ENCODE measurements at regions of chr4 and their contacts with region 1.

Region 1: DNA sequence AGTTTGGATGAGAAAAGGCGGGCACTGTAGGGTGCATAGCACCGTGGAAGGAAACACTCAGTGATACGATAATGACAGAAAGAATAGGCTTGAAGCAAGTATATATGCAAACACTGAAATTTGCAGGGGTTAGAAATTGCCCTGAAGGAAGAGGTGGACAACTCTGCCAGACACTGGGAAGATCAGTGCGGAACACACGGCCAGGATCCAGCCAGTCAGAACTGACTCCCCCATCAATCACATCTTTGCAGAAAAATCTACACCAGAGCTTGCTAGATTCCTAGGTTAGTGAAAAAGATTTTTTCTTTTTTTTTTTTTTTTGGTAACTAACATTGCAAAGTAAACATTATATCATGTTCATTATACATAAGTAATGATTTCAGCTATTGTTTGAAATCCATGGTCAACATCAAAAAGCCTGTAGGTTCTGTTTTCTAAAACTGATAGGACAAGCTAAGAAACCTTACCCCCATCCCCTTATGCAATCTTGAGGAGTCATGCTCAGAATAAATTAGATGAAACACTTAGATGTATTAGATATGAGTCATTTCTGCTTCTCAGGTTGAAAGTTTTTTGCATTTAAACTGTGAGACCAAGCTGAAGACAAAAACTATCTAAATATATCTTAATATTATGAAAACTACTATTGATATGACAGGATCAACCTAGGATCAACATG is 38.9 kb downstream of the TRIML1 start:
- DNase-seq: peak; percentile 78
- H3K4me3 Mint-ChIP-seq: no peak overlapping the region
- H3K27ac Mint-ChIP-seq: no peak overlapping the region
- H3K4me1 Mint-ChIP-seq: peaks cover 25% of the 10 kb centered on the region
- H3K27me3 Mint-ChIP-seq: no peaks in the 10 kb centered on the region
- CTCF ChIP-seq: no peak

Region 2: GRCh38 chr4:187618701-187619281 is 559.3 kb before region 1 on chr4:
- CTCF ChIA-PET with region 1: no interaction called
- POLR2A ChIA-PET with region 1: no interaction called
- intact Hi-C with region 1: loop called (anchors 1 kb)
- DNase-seq: peak; percentile 41
- H3K4me3 Mint-ChIP-seq: no peak overlapping the region
- H3K27ac Mint-ChIP-seq: peak overlapping the region; percentile 57
- H3K4me1 Mint-ChIP-seq: peaks cover 11% of the 10 kb centered on the region
- H3K27me3 Mint-ChIP-seq: no peaks in the 10 kb centered on the region
- CTCF ChIP-seq: no peak

Region 3: GRCh38 chr4:187789078-187789477 is 389.1 kb before region 1 on chr4:
- CTCF ChIA-PET with region 1: no interaction called
- POLR2A ChIA-PET with region 1: no interaction called
- intact Hi-C with region 1: no loop called
- DNase-seq: no peak
- H3K4me3 Mint-ChIP-seq: no peak overlapping the region
- H3K27ac Mint-ChIP-seq: no peak overlapping the region
- H3K4me1 Mint-ChIP-seq: no peaks in the 10 kb centered on the region
- H3K27me3 Mint-ChIP-seq: no peaks in the 10 kb centered on the region
- CTCF ChIP-seq: no peak

Region 4: DNA sequence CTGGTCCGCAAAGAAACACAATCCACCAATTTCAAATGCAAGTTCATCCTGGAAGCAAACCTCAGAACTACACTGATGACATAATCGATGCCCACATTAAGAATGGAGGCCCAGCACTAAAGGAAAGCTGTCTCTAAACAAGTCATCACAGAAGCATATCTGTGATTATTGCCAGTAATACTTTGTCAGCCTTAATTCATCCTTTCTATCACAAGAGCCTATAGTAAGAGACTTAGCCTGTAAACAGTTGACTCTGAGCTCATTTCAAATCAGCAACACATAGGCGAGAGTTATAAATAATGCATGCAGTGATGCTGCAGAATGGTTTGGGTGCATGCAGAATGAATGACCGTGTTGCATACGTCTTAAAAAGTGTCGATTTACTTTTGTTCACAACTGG is 288.5 kb before region 1 on chr4:
- CTCF ChIA-PET with region 1: no interaction called
- POLR2A ChIA-PET with region 1: no interaction called
- intact Hi-C with region 1: no loop called
- DNase-seq: no peak
- H3K4me3 Mint-ChIP-seq: no peak overlapping the region
- H3K27ac Mint-ChIP-seq: no peak overlapping the region
- H3K4me1 Mint-ChIP-seq: no peaks in the 10 kb centered on the region
- H3K27me3 Mint-ChIP-seq: no peaks in the 10 kb centered on the region
- CTCF ChIP-seq: no peak

Region 5: GRCh38 chr4:187903700-187904099 is 274.4 kb before region 1 on chr4:
- CTCF ChIA-PET with region 1: no interaction called
- POLR2A ChIA-PET with region 1: no interaction called
- intact Hi-C with region 1: no loop called
- DNase-seq: no peak
- H3K4me3 Mint-ChIP-seq: no peak overlapping the region
- H3K27ac Mint-ChIP-seq: no peak overlapping the region
- H3K4me1 Mint-ChIP-seq: peaks cover 13% of the 10 kb centered on the region
- H3K27me3 Mint-ChIP-seq: no peaks in the 10 kb centered on the region
- CTCF ChIP-seq: no peak

Region 6: GRCh38 chr4:188372826-188373225 is 194.7 kb after region 1 on chr4:
- CTCF ChIA-PET with region 1: interaction called, 3 read pairs
- POLR2A ChIA-PET with region 1: no interaction called
- intact Hi-C with region 1: loop called (anchors 1 kb)
- DNase-seq: peak; percentile 59
- H3K4me3 Mint-ChIP-seq: no peak overlapping the region
- H3K27ac Mint-ChIP-seq: peak overlapping the region; percentile 68
- H3K4me1 Mint-ChIP-seq: peaks cover 5% of the 10 kb centered on the region
- H3K27me3 Mint-ChIP-seq: no peaks in the 10 kb centered on the region
- CTCF ChIP-seq: peak; percentile 53

Region 7: GRCh38 chr4:188767496-188767895 is 589.4 kb after region 1 on chr4:
- CTCF ChIA-PET with region 1: no interaction called
- POLR2A ChIA-PET with region 1: no interaction called
- intact Hi-C with region 1: no loop called
- DNase-seq: peak; percentile 11
- H3K4me3 Mint-ChIP-seq: no peak overlapping the region
- H3K27ac Mint-ChIP-seq: no peak overlapping the region
- H3K4me1 Mint-ChIP-seq: no peaks in the 10 kb centered on the region
- H3K27me3 Mint-ChIP-seq: no peaks in the 10 kb centered on the region
- CTCF ChIP-seq: no peak

Measured in MCF 10A (cell line).